Activated CD8-positive, alpha-beta T cell treated with anti-CD3 and anti-CD28 coated beads, Interleukin-2, amount 10 ng/mL, durations not matched to agents 7 days and 5 days (primary cell): ENCODE measurements at regions of chr17 and their contacts with region 1.

Region 1: GRCh38 chr17:42027961-42028790 is 8.3 kb downstream of the NKIRAS2 start:
- DNase-seq: no peak
- ATAC-seq: no peak
- H3K4me3 Mint-ChIP-seq: no peak overlapping the region
- H3K27ac Mint-ChIP-seq: no peak overlapping the region
- H3K4me1 Mint-ChIP-seq: peaks cover 17% of the 10 kb centered on the region
- H3K27me3 Mint-ChIP-seq: no peaks in the 10 kb centered on the region

Region 2: DNA sequence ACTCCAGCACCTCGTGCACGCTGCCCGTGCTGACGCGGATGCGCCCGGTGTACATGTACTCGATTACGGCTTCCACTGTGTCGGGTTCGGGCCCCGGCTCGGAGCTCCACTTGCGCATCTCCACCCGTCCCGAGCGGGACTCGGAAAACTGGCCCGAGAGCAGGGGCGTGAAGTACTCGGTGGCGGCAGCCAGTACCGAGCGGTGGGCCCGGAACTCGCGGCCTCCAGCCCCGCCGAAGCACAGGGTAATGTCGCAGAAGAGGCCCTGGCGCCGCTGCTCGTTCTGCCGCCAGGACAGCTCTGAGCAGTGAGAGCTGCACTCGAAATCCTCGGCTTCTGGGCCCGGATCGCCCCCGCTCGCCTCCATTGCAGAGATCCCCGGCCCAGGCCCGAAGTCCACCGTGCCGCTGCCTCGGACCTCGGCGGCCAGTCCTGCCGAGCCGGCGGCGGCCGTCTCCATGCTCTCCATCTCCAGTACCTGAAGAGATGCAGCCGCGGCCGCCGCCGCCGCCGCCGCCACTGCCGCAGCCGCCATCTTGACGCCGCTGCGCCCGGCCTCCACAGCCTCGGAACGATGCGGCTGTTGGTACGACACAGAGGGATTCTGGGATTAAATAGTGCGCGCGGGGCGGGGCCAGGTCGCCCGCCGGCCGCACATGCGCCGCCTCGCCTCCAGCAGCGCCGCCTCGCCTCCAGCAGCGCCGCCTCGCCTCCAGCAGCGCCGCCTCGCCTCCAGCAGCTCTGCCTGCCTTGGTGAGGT is 163.2 kb before region 1 on chr17 and contains the start of gene KLHL11:
- CTCF ChIA-PET with region 1: no interaction called
- POLR2A ChIA-PET with region 1: no interaction called
- DNase-seq: peak; percentile 92
- ATAC-seq: peak; percentile 94
- H3K4me3 Mint-ChIP-seq: no peak within 1 kb of the TSS
- H3K27ac Mint-ChIP-seq: no peak within 1 kb of the TSS
- H3K4me1 Mint-ChIP-seq: peaks cover 25% of the 10 kb centered on the region
- H3K27me3 Mint-ChIP-seq: no peaks in the 10 kb centered on the region
- total RNA-seq, gene KLHL11: 12.3 to 13.2 TPM

Region 3: GRCh38 chr17:42101513-42102319 is 73.5 kb after region 1 on chr17:
- CTCF ChIA-PET with region 1: interaction called, 168 read pairs
- POLR2A ChIA-PET with region 1: no interaction called
- DNase-seq: peak; percentile 75
- ATAC-seq: peak; percentile 66
- H3K4me3 Mint-ChIP-seq: no peak overlapping the region
- H3K27ac Mint-ChIP-seq: no peak overlapping the region
- H3K4me1 Mint-ChIP-seq: peaks cover 13% of the 10 kb centered on the region
- H3K27me3 Mint-ChIP-seq: peaks cover 14% of the 10 kb centered on the region

Region 4: GRCh38 chr17:42120770-42121769 is 92.9 kb after region 1 on chr17 and contains the start of gene KAT2A:
- CTCF ChIA-PET with region 1: interaction called, 168 read pairs
- POLR2A ChIA-PET with region 1: interaction called, 4 read pairs
- DNase-seq: peak; percentile 83
- ATAC-seq: peak; percentile 92
- H3K4me3 Mint-ChIP-seq: peak within 1 kb of the TSS; percentile 73
- H3K27ac Mint-ChIP-seq: peak within 1 kb of the TSS; percentile 54
- H3K4me1 Mint-ChIP-seq: peaks cover 33% of the 10 kb centered on the region
- H3K27me3 Mint-ChIP-seq: no peaks in the 10 kb centered on the region
- total RNA-seq, gene KAT2A: 45.2 to 46.8 TPM